Activated B cell treated with CpG ODN at 0.5 μM for 24 hours (primary cell): ENCODE measurements at regions of chr4 and their contacts with region 1.

Region 1: GRCh38 chr4:153364997-153365396 is 20.5 kb downstream of the MND1 start:
- DNase-seq: no peak
- ATAC-seq: no peak
- H3K4me3 Mint-ChIP-seq: no peak overlapping the region
- H3K27ac Mint-ChIP-seq: no peak overlapping the region
- H3K4me1 Mint-ChIP-seq: peaks cover 6% of the 10 kb centered on the region
- H3K27me3 Mint-ChIP-seq: no peaks in the 10 kb centered on the region
- CTCF ChIP-seq: no peak

Region 2: DNA sequence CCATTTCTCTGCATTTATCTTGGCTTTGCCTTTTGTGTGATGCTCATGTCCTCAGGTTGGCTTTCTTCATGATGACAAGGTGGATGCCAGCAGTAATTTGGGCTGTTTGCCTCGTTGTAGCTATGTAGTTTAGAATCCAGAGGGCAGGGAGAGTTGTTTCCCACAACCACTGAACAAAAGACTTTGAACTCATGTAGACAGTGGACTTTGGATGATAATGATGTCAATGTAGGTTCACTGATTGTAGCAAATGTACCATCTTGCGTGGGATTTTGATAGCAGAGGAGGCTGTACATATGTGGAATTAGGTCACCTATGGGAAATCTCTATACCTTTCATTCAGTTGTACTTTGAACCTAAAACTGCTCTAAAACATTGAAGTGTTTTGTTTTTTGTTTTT is 20.8 kb after region 1 on chr4:
- CTCF ChIA-PET with region 1: no interaction called
- POLR2A ChIA-PET with region 1: no interaction called
- intact Hi-C with region 1: loop called (anchors 1 kb)
- DNase-seq: no peak
- ATAC-seq: no peak
- H3K4me3 Mint-ChIP-seq: no peak overlapping the region
- H3K27ac Mint-ChIP-seq: no peak overlapping the region
- H3K4me1 Mint-ChIP-seq: no peaks in the 10 kb centered on the region
- H3K27me3 Mint-ChIP-seq: no peaks in the 10 kb centered on the region
- CTCF ChIP-seq: no peak

Region 3: DNA sequence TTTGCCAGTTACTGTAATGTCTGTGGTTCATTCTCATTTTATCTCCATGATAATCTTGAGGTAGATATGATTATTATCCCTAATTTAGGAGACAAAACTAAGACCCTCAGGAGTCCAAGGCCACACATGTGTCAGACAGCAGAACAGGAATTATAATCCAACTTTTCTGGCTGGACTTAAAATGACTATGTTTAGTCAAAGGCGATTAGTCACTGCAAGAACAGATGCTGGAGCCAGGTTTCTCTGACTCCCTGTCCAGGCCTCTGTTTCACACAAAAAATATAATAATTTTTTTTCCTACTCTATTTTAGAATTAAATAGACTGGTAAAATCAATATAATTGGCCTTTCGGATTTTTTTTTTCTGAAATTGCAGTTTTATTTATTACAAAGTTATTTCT is 44.4 kb after region 1 on chr4:
- CTCF ChIA-PET with region 1: no interaction called
- POLR2A ChIA-PET with region 1: no interaction called
- intact Hi-C with region 1: loop called (anchors 5 kb)
- DNase-seq: no peak
- ATAC-seq: no peak
- H3K4me3 Mint-ChIP-seq: no peak overlapping the region
- H3K27ac Mint-ChIP-seq: no peak overlapping the region
- H3K4me1 Mint-ChIP-seq: no peaks in the 10 kb centered on the region
- H3K27me3 Mint-ChIP-seq: no peaks in the 10 kb centered on the region
- CTCF ChIP-seq: no peak